ENCODE measurements at regions of chr9 and their contacts with region 1.

Region 1: GRCh38 chr9:129139993-129140396 is 28.8 kb downstream of the PTPA start:
- DNase-seq: peak; percentile 85

Region 2: GRCh38 chr9:128992995-128993394 is 147.0 kb before region 1 on chr9:
- CTCF ChIA-PET with region 1: no interaction called
- POLR2A ChIA-PET with region 1: no interaction called
- DNase-seq: no peak

Region 3: GRCh38 chr9:129078691-129079503 is 61.1 kb before region 1 on chr9:
- CTCF ChIA-PET with region 1: no interaction called
- POLR2A ChIA-PET with region 1: no interaction called
- DNase-seq: no peak

Region 4: DNA sequence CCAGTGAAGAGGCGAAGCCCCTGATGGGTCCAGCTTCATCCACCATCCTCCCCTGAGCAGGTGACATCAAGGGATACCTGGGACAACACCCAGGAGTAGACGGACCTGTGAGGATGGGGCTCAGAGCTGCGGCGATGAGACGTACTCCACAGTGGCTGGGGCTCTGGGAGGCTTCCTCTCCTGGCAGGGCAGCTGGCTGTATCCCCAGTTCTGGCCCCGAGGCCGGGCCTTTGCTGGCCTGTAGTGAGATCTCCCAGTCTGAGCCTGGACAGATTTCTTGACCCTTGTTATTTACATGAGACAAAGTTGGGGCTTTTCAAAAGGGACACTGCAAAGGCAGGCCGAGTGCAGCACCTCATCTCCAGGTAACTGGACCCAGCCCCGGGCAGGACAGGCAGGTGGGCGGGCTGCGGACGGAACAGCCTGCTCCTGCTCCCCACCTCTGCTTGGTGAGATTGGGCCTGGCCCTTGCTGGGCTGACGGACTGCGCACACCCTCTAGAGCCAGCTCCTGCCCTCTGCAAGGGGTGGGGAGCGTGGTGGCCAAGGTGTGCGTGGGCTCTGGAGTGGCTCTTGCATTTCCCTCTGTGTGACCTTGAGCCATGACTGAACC is 15.0 kb after region 1 on chr9:
- CTCF ChIA-PET with region 1: interaction called, 10 read pairs
- POLR2A ChIA-PET with region 1: no interaction called
- DNase-seq: no peak

Region 5: GRCh38 chr9:129166623-129167557 is 26.9 kb after region 1 on chr9:
- CTCF ChIA-PET with region 1: interaction called, 10 read pairs
- POLR2A ChIA-PET with region 1: interaction called, 26 read pairs
- DNase-seq: peak; percentile 57

Region 6: DNA sequence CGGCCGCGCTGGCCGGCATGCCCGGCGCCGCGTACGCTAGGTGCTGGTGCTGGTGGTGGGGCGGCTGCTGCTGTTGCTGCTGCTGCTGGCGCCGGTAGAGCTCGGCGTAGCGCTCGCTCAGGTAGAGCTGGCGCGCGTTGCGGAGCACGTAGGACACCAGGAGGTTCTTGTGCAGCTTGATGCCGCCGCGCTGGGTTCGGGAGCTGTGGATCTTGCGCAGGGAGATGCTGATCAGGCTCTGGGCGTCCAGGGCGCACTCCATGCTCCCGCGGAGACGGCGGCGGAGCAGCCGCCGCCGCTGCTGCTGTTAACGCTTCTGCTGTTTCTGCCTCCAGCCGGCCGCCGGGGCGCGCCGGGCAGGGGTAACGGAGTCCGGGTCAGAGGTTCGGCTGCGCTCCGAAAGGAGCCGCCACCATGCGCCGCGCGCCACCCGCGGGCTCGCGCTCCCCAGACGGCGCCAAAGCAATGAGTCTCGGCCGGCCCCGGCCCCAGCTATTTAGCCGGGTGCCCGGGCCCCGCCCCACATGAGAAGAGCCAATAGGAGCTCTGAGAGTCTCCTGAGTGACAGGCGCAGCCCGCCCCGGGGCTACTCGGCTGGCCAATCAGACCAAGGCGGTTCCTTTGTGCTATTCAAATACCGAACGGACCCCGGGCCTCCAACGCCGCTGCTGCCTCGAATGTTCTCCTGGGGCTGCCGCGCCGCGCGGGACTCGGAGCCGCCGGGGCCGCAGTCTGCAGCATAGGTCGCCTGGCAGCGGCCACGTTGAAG is 38.0 kb after region 1 on chr9 and contains the start of gene IER5L:
- CTCF ChIA-PET with region 1: interaction called, 10 read pairs
- POLR2A ChIA-PET with region 1: interaction called, 26 read pairs
- DNase-seq: peak; percentile 97